WTC11 (cell line): ENCODE measurements at regions of chr16 and their contacts with region 1.

Region 1: GRCh38 chr16:67595033-67595355 is 32.7 kb downstream of the CTCF start:
- DNase-seq: no peak
- ATAC-seq: peak; percentile 38
- H3K4me3 Mint-ChIP-seq: peak overlapping the region; percentile 43
- H3K27ac Mint-ChIP-seq: peak overlapping the region; percentile 89
- H3K4me1 Mint-ChIP-seq: peaks cover 54% of the 10 kb centered on the region
- H3K27me3 Mint-ChIP-seq: no peaks in the 10 kb centered on the region
- CTCF ChIP-seq: no peak

Region 2: DNA sequence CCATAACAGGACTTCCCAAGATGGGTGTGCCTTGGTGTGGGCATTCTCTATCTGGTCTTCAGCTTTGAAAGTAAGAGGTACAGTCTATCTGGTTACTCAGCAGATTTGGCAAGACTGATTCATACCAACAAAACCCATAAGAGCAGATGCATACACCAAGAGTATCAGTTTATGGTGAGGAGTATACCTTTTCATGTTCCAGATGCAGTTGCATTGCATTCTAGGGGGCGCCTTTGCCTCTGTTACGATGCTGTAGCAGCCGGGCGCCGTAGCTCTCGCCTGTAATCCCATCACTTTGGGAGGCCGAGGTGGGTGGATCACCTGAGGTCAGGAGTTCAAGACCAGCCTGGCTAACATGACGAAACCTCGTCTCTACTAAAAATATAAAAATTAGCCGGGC is 18.8 kb after region 1 on chr16:
- CTCF ChIA-PET with region 1: interaction called, 10 read pairs
- POLR2A ChIA-PET with region 1: no interaction called
- DNase-seq: peak; percentile 73
- ATAC-seq: peak; percentile 80
- H3K4me3 Mint-ChIP-seq: no peak overlapping the region
- H3K27ac Mint-ChIP-seq: no peak overlapping the region
- H3K4me1 Mint-ChIP-seq: no peaks in the 10 kb centered on the region
- H3K27me3 Mint-ChIP-seq: no peaks in the 10 kb centered on the region
- CTCF ChIP-seq: peak; percentile 40; the same call in 1 of the 2 replicates